ENCODE measurements at regions of chr4 and their contacts with region 1.

Region 1: DNA sequence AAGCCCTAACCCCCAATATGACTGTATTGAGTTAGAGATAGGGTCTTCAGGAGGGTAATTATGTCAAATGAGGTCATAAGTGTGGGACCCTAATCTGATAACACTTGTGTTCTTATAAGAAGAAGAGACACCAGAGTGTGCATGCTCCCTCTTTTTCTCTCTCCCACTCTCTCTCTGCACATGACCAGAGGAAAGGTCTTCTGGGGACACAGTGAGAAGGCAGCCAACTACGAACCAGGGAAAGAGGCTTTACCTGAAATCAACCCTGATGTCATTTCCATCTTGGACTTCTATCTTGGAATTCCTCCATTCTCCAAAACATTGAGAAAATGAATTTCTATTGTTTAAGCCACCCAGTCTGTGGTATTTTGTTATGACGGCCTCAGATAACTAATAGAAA is 97.2 kb upstream of the MAD2L1 start:
- DNase-seq: no peak
- H3K4me3 ChIP-seq: no peak overlapping the region
- H3K27ac ChIP-seq: no peak overlapping the region
- H3K4me1 ChIP-seq: no peaks in the 10 kb centered on the region
- H3K27me3 ChIP-seq: no peaks in the 10 kb centered on the region

Region 2: DNA sequence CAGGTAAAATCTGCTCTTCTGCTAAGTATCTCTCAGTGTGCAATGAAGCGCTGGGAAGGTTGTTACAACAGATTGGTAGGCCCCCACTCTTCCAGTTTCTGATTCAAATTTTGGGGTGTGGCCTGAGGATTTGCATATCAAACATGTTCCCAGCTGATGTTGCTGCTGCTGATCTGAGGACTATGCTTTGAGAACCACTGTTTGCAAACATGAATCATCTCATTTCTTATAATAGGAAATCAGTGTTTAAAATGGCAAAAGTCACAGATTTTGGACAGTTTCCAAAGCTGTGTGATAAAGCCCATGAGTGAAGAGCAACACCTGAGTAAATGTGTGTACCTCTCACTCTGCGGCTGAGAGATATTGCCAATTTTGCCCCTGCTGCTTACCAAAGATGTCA is 944.7 kb after region 1 on chr4:
- in situ Hi-C with region 1: loop called (anchors 10 kb)
- DNase-seq: no peak
- H3K4me3 ChIP-seq: no peak overlapping the region
- H3K27ac ChIP-seq: no peak overlapping the region
- H3K4me1 ChIP-seq: no peaks in the 10 kb centered on the region
- H3K27me3 ChIP-seq: no peaks in the 10 kb centered on the region

Measured in GM23248 (cell line).